Activated CD4-positive, alpha-beta T cell treated with anti-CD3 and anti-CD28 coated beads, Interleukin-2, amount 10 ng/mL, durations not matched to agents 24 days and 14 days (primary cell): ENCODE measurements at regions of chr4 and their contacts with region 1.

Region 1: GRCh38 chr4:184168406-184169019 is 49.2 kb downstream of the ENPP6 start:
- DNase-seq: peak; percentile 88
- H3K4me3 Mint-ChIP-seq: no peak overlapping the region
- H3K27ac Mint-ChIP-seq: no peak overlapping the region
- H3K4me1 Mint-ChIP-seq: peaks cover 14% of the 10 kb centered on the region
- H3K27me3 Mint-ChIP-seq: peaks cover 48% of the 10 kb centered on the region

Region 2: GRCh38 chr4:183471946-183472708 is 696.4 kb before region 1 on chr4:
- intact Hi-C with region 1: loop called (anchors 10 kb)
- DNase-seq: peak; percentile 93
- H3K4me3 Mint-ChIP-seq: no peak overlapping the region
- H3K27ac Mint-ChIP-seq: no peak overlapping the region
- H3K4me1 Mint-ChIP-seq: peaks cover 2% of the 10 kb centered on the region
- H3K27me3 Mint-ChIP-seq: no peaks in the 10 kb centered on the region

Region 3: DNA sequence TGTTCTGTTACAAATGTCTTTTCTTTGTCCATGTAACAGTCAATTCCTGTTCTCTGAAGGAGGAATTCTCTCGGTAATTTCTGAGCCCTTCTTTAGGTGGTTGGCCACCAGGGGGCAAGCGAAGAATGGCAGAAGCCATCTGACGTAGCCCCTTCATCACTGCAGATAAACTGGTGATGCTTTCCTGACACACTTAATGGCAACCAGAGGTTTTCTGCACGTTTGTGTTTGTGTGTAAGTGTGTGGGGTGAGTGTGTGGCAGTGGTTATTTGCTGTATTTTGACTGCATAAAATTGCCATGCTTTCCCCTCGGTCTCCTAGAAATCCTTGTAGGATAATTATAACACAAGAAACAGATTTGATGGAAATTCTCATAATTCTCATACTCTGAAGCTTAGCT is 328.2 kb before region 1 on chr4:
- intact Hi-C with region 1: loop called (anchors 1 kb)
- DNase-seq: peak; percentile 88
- H3K4me3 Mint-ChIP-seq: no peak overlapping the region
- H3K27ac Mint-ChIP-seq: no peak overlapping the region
- H3K4me1 Mint-ChIP-seq: no peaks in the 10 kb centered on the region
- H3K27me3 Mint-ChIP-seq: peaks cover 6% of the 10 kb centered on the region

Region 4: GRCh38 chr4:184237612-184238011 is 69.1 kb after region 1 on chr4:
- intact Hi-C with region 1: loop called (anchors 5 kb)
- DNase-seq: peak; percentile 87
- H3K4me3 Mint-ChIP-seq: peak overlapping the region; percentile 68
- H3K27ac Mint-ChIP-seq: peak overlapping the region; percentile 94
- H3K4me1 Mint-ChIP-seq: peaks cover 51% of the 10 kb centered on the region
- H3K27me3 Mint-ChIP-seq: no peaks in the 10 kb centered on the region

Region 5: DNA sequence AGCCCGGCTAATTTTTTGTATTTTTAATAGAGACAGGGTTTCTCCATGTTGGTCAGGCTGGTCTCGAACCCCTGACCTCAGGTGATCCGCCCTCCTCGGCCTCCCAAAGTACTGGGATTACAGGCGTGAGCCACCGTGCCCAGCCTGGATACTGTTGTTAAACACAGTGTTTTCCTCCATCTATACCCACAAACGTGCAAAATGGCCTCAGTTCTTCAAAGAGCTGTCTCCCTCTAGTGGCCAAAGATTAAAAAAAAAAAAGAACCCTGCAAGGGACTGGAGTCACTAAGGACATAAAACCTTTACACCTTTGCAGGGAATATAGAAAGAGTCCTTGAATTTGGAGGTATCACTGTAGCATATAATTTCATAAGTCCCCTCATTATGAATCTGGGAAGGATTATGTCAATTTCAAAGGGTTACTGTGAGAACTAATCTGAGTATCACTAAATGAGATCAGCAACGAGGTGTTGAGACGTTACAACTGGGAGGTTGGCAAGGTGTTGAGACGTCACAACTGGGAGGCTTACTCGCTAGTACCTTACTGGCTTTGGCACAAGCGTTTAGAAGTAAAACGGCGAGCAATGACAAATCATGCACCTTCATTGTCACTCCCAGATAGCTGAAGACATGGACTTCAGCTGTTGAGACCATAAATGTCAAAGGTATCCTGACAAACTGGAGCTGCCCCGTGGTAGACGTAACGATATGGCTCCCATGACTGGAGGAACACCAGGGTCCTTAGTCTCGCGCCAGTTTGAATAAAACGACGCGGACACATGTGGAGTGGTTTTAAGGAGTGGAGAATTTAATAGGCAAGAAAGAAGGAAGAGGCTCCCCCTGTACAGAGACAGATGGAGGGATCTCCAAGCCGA is 82.5 kb after region 1 on chr4:
- intact Hi-C with region 1: loop called (anchors 1 kb)
- DNase-seq: peak; percentile 83
- H3K4me3 Mint-ChIP-seq: no peak overlapping the region
- H3K27ac Mint-ChIP-seq: peak overlapping the region; percentile 89
- H3K4me1 Mint-ChIP-seq: peaks cover 15% of the 10 kb centered on the region
- H3K27me3 Mint-ChIP-seq: no peaks in the 10 kb centered on the region